Activated T-helper 2 cell treated with anti-CD3 and anti-CD28 coated beads, Interferon-gamma antibody, Interleukin-2, Interleukin-4, amounts not matched to agents 10 μg/mL and 5 μg/mL and 100 μg/mL, durations not matched to agents 14 hours and 24 hours and 36 hours (primary cell): ENCODE measurements at regions of chr22 and their contacts with region 1.

Region 1: DNA sequence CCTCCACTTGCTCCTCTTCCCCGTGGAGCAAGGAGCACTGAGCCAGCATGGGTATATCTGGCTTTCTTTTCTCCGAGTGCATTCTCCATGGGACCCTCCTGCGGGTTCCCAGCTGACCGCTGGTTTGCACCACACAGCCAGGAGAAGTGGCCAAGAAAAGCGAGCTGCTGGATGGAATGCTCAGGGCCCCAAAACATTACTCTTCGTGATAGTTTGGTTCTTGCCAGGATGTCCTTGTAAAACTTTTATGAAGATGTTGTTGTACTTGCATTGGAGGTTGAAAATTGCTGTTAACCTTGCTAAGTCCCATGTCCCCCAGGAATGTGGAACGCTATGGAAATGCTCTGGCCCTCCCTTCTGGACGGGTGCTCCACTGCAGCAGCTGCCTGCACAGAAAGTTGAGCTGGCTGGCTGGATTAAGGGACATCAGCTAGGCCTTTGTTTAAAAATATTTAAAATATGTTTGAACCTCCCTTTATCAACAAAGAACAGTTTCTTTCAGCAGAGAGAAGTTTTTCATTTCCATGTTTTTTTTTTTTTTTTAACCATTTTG is 68.7 kb downstream of the ZNRF3 start:
- DNase-seq: no peak
- H3K4me3 Mint-ChIP-seq: no peak overlapping the region
- H3K27ac Mint-ChIP-seq: no peak overlapping the region
- H3K4me1 Mint-ChIP-seq: peaks cover 11% of the 10 kb centered on the region
- H3K27me3 Mint-ChIP-seq: peaks cover 79% of the 10 kb centered on the region

Region 2: GRCh38 chr22:28674121-28674563 is 277.9 kb before region 1 on chr22:
- intact Hi-C with region 1: loop called (anchors 5 kb)
- DNase-seq: peak; percentile 41
- H3K4me3 Mint-ChIP-seq: no peak overlapping the region
- H3K27ac Mint-ChIP-seq: peak overlapping the region; percentile 93
- H3K4me1 Mint-ChIP-seq: peaks cover 26% of the 10 kb centered on the region
- H3K27me3 Mint-ChIP-seq: peaks cover 62% of the 10 kb centered on the region

Region 3: DNA sequence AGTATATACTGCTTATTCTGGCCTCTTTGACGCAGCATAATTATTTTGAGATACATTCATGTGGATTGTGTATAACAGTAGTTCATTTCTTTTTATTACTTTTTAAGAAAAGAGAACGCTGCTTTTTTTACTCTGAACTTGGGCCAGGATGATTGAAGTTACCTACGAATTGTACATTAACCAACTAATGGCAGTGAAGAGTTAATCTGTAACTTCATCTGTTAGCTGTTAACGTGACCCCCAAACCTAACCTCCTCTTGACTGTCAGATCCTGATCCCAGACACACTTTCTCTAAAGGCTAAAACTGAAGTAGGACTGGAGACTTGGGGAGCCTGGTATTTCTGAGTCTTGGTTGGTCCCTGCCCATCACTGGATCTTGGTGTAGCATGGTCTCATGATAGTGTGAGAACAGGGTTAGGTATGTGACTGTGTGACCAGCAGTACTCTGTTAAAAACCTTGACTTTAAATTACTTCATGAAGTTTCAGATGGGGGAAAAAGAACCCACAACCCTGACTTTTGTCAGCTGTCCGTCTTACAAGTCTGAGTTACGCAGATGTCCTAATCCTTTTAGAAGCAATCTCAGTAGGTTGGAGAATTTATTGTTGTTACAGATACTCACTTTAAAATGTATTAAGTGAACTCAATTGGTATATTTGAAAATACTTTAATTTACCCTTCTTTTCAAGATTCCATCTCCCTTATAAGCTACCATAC is 70.2 kb after region 1 on chr22:
- intact Hi-C with region 1: loop called (anchors 10 kb)
- DNase-seq: no peak
- H3K4me3 Mint-ChIP-seq: no peak overlapping the region
- H3K27ac Mint-ChIP-seq: no peak overlapping the region
- H3K4me1 Mint-ChIP-seq: no peaks in the 10 kb centered on the region
- H3K27me3 Mint-ChIP-seq: peaks cover 60% of the 10 kb centered on the region

Region 4: DNA sequence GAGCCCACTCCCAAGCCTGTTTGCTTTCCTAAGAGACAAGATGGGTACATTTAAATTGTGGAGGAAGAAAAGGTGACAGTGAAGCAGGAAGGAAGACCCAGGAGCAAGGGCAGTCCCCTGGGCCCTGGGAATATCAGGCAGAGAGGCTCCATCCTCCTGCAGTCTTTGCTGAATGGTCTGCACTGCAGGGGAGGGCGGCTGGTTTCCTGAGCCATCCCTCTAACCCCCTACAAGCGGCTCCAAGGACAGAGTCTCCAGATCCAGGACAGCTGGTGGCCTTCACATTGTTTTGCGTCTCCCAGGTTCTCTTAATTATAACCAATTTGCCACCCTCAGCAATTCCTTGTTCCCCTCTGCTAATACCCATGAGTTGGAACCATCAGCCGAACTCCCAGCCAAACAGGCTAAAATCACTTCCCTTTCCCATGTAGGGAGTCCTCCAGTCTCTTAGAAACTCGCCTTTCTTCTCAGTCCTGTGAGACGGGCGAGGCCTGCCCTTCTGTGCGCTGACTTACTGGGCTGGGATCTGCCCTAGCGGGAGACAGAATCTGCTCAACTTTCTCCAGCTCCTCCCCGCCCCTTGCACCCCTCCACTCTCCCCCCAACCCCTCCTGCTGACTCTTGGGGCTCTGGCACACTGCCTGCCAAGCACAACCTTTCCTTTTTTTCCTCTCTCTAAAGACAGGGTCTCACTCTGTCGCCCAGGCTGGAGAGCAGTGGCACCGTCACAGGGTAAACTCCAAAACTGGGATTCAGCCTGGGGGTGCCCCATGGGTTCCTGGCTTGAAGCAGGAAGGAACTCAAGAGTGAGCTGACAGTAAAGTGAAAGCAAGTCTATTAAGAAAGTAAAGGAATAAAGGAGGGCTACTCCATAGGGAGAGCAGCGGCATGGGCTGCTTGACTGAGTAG is 200.3 kb after region 1 on chr22:
- intact Hi-C with region 1: no loop called
- DNase-seq: no peak
- H3K4me3 Mint-ChIP-seq: no peak overlapping the region
- H3K27ac Mint-ChIP-seq: no peak overlapping the region
- H3K4me1 Mint-ChIP-seq: peaks cover 10% of the 10 kb centered on the region
- H3K27me3 Mint-ChIP-seq: peaks cover 16% of the 10 kb centered on the region